Activated B cell treated with CpG ODN at 0.5 μM for 24 hours (primary cell): ENCODE measurements at regions of chr14 and their contacts with region 1.

Region 1: DNA sequence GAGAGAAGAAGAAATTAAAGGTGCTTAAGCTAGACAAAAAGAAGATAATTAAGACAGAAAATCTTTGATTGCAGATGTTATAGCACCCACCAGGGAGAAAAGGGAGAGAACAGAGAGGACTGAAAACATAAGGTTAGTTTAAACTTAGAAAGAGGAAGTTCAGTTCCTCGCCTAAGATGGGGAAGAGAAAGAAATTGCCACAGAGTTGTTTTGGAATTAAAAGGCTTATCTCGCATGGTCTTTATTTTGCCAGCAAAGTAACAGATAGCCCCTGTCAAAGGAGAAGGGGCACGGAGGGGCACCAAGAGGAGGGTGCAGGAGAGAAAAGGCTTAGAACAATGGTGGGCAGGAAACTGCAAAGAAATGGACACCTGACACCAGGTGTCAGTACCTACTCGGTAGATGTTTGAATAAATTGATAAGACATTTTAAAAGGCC is 17.8 kb upstream of the OXA1L start:
- DNase-seq: peak; percentile 24
- ATAC-seq: peak; percentile 78
- H3K4me3 Mint-ChIP-seq: peak overlapping the region; percentile 78
- H3K27ac Mint-ChIP-seq: peak overlapping the region; percentile 99
- H3K4me1 Mint-ChIP-seq: peaks cover 23% of the 10 kb centered on the region
- H3K27me3 Mint-ChIP-seq: no peaks in the 10 kb centered on the region
- CTCF ChIP-seq: no peak

Region 2: GRCh38 chr14:22713631-22713950 is 35.1 kb before region 1 on chr14:
- CTCF ChIA-PET with region 1: no interaction called
- POLR2A ChIA-PET with region 1: no interaction called
- intact Hi-C with region 1: loop called (anchors 2 kb)
- DNase-seq: no peak
- ATAC-seq: no peak
- H3K4me3 Mint-ChIP-seq: peak overlapping the region; percentile 88
- H3K27ac Mint-ChIP-seq: peak overlapping the region; percentile 78
- H3K4me1 Mint-ChIP-seq: peaks cover 13% of the 10 kb centered on the region
- H3K27me3 Mint-ChIP-seq: peaks cover 29% of the 10 kb centered on the region
- CTCF ChIP-seq: no peak